ENCODE measurements at regions of chr6 and their contacts with region 1.

Region 1: DNA sequence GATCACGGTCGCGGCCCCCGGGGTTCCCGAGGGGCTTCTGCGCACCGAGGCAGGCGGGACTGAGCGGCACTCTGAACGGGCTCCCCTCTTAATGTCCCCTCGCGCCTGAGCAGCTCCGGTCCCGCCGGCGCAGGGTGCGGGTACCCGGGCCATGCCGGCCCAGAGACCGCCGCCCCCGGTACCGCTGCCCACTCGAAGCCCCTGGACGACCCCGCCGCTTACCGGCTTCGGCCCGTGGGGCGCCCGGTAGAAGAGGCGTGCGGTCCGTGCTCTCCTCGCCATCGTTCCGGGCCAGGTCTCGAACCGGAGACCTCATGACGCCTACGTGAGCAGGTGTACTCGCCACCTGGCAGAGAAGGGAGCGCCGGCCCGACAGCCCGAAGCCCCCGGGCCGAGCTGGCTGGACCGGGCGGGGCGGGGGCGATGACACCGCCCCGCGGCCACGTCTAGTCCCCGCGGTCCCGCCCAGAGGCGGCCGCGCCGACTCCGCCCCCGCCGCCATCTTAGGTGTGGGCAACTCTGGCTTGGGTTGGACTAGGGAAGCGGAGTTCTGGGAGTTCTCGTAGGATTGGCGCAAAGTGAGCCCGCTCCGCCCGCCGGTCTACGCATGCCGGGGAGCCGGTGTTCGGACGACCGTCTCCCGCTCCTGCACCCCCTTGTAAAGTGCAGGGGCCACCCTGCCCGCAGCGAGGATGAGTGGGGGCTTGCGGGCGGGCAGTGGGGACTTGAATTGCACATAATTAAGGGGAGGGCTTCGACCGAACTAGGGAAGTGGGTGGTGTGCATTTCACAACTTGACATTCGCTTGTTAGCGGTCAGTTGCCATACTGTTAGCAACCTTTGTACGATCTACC is at the start of gene SLC17A5:
- DNase-seq: peak; percentile 92
- H3K4me3 Mint-ChIP-seq: peak within 1 kb of the TSS; percentile 99
- H3K27ac Mint-ChIP-seq: peak within 1 kb of the TSS; percentile 83
- H3K4me1 Mint-ChIP-seq: peaks cover 21% of the 10 kb centered on the region
- H3K27me3 Mint-ChIP-seq: no peaks in the 10 kb centered on the region
- CTCF ChIP-seq: no peak
- total RNA-seq, gene SLC17A5: 20.7 and 21.3 TPM in 2 replicates

Region 2: DNA sequence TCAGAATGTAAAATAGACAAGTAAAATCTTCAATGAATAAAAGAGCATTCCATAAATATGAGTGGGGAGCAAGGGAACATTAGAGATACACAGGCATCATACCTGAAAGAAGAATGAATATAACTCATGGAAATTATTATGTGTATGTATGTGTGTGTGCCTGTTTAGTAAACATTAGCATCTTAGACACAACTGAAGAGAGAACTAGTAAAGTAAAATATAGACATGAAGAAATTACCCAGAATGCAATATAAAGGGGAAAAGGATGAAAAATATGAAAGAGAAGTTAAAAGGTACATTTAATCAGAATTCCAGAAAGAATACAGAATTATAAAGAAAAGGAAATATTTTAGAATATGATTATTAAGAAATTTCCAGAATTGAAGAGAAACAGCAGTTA is 767.6 kb before region 1 on chr6:
- CTCF ChIA-PET with region 1: no interaction called
- intact Hi-C with region 1: no loop called
- DNase-seq: no peak
- H3K4me3 Mint-ChIP-seq: no peak overlapping the region
- H3K27ac Mint-ChIP-seq: no peak overlapping the region
- H3K4me1 Mint-ChIP-seq: no peaks in the 10 kb centered on the region
- H3K27me3 Mint-ChIP-seq: no peaks in the 10 kb centered on the region
- CTCF ChIP-seq: no peak

Region 3: DNA sequence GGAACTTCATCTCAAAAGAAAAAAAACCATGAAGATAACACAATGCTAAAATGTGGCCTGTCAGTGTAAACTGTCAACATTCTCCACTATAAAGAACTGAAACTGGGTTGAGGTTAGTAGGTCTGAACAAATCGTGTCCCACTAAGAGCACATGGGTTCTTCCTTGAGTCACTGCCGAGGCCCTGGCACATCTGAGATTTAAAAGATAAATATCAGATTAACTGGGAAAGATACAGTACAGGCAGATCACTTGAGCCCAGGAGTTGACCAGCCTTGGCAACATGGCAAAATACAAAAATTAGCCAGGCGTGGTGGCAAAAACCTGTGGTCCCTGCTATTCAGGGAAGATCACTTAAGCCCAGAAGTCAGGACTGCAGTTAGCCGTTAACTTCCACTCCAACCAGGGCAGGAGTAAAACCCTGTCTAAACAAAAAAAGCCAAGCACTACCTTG is 138.6 kb before region 1 on chr6:
- CTCF ChIA-PET with region 1: interaction called, 4 read pairs
- intact Hi-C with region 1: loop called (anchors 2 kb)
- DNase-seq: no peak
- H3K4me3 Mint-ChIP-seq: peak overlapping the region; percentile 68
- H3K27ac Mint-ChIP-seq: peak overlapping the region; percentile 29
- H3K4me1 Mint-ChIP-seq: peaks cover 14% of the 10 kb centered on the region
- H3K27me3 Mint-ChIP-seq: peaks cover 7% of the 10 kb centered on the region
- CTCF ChIP-seq: no peak

Region 4: DNA sequence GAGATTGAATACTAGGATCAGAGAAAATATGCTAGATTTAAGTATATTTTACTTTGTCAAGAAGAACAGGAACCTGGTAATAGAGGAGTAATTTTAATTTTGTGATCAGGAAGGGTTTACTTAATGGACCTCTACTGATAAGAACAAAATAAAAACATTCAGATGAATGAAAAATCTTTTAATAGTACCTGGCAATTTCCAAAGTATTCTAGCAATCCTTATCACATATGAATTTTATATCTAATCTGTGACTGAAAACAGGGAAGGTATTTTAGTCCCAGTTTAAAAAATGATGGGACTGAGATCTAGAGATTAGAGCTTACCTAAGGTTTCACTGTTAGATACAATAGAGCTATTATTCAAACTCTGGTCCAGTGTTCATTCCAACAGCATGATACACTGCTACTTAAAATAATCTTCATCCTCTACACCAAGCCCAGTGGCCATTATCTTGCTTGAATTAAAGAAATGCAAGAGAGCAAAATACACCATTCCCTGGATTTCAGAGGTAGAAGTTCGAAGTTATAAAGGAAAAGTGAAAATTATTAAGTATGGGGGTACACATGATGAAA is 13.5 kb before region 1 on chr6:
- CTCF ChIA-PET with region 1: interaction called, 11 read pairs
- intact Hi-C with region 1: no loop called
- DNase-seq: peak; percentile 10
- H3K4me3 Mint-ChIP-seq: no peak overlapping the region
- H3K27ac Mint-ChIP-seq: peak overlapping the region; percentile 11
- H3K4me1 Mint-ChIP-seq: peaks cover 46% of the 10 kb centered on the region
- H3K27me3 Mint-ChIP-seq: no peaks in the 10 kb centered on the region
- CTCF ChIP-seq: no peak

Measured in Calu3 (cell line).